Heart left ventricle (tissue), 16 donors: ENCODE measurements at regions of chr11 and their contacts with region 1.

Region 1: GRCh38 chr11:108632041-108632440 is 32.8 kb upstream of the DDX10 start:
- DNase-seq: no peak
- ATAC-seq: no peak
- H3K4me3 ChIP-seq: no peak overlapping the region
- H3K27ac ChIP-seq: no peak overlapping the region
- H3K4me1 ChIP-seq: no peaks in the 10 kb centered on the region
- H3K27me3 ChIP-seq: peaks cover 0 to 7% (median 0%) of the 10 kb centered on the region in 9 donors
- CTCF ChIP-seq: no peak
- POLR2A ChIP-seq: no peak

Region 2: GRCh38 chr11:108606495-108607160 is 25.4 kb before region 1 on chr11:
- intact Hi-C with region 1: loop called in 1 of 10 experiments (anchors 2 kb)
- DNase-seq: no peak
- ATAC-seq: no peak
- H3K4me3 ChIP-seq: no peak overlapping the region
- H3K27ac ChIP-seq: no peak overlapping the region
- H3K4me1 ChIP-seq: no peaks in the 10 kb centered on the region
- H3K27me3 ChIP-seq: peaks cover 0 to 12% (median 0%) of the 10 kb centered on the region in 9 donors
- CTCF ChIP-seq: no peak
- POLR2A ChIP-seq: no peak